ENCODE measurements at regions of chr19 and their contacts with region 1.

Region 1: DNA sequence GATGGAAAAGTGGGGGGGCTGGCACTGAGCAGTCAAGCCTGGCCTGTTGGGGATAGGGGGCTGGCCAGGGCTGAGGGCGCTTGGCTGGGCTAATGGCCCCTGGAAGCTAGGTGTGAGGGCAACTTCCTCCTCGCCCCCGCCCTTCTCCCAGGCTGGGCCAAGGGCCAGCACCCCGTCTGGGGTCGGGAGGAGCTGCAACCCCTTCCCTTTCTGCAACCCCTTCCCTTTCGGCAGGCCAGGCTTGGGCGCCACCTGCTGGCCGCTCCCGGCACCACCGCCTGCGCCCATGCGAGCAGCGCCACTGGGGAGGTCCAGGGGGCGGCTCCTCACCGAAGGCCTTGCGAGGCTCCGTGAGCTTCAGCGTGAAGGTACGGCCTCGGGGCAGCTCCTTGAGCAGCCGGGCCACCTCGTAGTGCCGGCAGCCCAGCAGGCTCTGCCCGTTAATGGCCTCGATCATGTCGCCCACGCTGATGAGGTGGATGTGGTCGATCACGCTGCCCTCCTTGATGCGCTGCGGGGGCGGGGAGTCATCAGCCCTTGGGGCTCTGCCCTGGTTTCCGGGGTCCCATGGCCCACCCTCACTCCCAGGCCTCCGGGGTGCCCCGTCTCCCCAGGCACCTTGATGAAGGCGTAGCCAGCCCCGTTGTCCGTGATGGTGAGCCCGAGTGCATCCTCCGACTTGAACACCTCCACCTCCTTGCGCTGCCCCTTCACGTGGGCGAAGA is 5.0 kb upstream of the PTGER1 start:
- DNase-seq: peak; percentile 95
- H3K4me3 ChIP-seq: peak overlapping the region in 1 of 2 experiments; percentile 50; a peak in 1 of 4 replicates
- H3K27ac ChIP-seq: peak overlapping the region in 1 of 2 experiments; percentile 22; a peak in 1 of 4 replicates
- H3K4me1 ChIP-seq: peaks cover 18 to 26% of the 10 kb centered on the region in 2 experiments; a peak in 3 of 4 replicates
- H3K27me3 ChIP-seq: no peaks in the 10 kb centered on the region
- CTCF ChIP-seq: peak; percentile 89
- EP300 ChIP-seq: no peak
- RAD21 ChIP-seq: peak; percentile 54

Region 2: GRCh38 chr19:14366498-14366915 is 113.6 kb before region 1 on chr19:
- CTCF ChIA-PET with region 1: interaction called, 13 read pairs
- POLR2A ChIA-PET with region 1: no interaction called
- DNase-seq: peak; percentile 51
- H3K4me3 ChIP-seq: no peak overlapping the region
- H3K27ac ChIP-seq: no peak overlapping the region
- H3K4me1 ChIP-seq: peaks cover 0 to 6% of the 10 kb centered on the region in 2 experiments; a peak in 1 of 4 replicates
- H3K27me3 ChIP-seq: no peaks in the 10 kb centered on the region
- CTCF ChIP-seq: no peak
- EP300 ChIP-seq: no peak
- RAD21 ChIP-seq: no peak

Region 3: GRCh38 chr19:14377883-14378328 is 102.2 kb before region 1 on chr19:
- CTCF ChIA-PET with region 1: no interaction called
- POLR2A ChIA-PET with region 1: no interaction called
- DNase-seq: no peak
- H3K4me3 ChIP-seq: no peak overlapping the region
- H3K27ac ChIP-seq: no peak overlapping the region
- H3K4me1 ChIP-seq: peaks cover 0 to 16% of the 10 kb centered on the region in 2 experiments; a peak in 2 of 4 replicates
- H3K27me3 ChIP-seq: no peaks in the 10 kb centered on the region
- CTCF ChIP-seq: no peak
- EP300 ChIP-seq: no peak
- RAD21 ChIP-seq: no peak

Region 4: DNA sequence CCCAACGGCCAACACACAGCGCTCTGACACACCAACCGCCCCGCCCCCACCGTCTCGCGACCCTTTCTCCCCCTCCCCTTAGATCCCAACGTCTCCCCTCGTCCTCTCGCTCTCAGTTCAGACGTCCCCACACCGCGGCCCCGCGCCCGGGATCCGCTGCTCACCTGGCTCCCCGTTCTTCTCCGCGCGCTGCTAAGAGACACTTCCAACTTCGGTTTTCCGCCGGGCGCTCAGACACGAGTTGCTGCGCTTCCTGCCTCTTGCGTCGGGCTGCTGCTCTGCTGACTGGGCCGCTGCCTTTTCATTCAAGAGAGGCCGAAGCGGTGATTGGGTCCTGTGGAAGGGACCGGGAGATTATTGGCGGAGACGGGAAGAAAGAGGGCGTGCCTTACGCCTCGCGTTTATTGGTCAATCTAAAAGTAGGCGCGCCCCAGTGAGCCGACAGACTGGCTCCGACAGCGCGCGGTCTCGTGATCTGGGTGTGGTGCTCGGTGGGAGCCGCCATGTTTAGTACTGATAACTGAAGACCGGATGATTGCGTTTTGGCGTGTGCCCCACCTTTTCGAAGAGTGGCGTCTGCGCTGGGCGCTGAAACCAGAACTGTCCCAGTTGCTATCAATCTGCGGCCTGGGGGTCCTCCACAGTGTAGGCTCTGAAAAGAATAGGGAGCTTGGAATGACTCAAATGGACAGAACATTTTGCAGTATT is 60.9 kb before region 1 on chr19 and contains the start of gene DDX39A:
- CTCF ChIA-PET with region 1: interaction called, 12 read pairs
- POLR2A ChIA-PET with region 1: no interaction called
- DNase-seq: peak; percentile 95
- H3K4me3 ChIP-seq: peak within 1 kb of the TSS; percentile 61 to 98
- H3K27ac ChIP-seq: peak within 1 kb of the TSS; percentile 86 to 91
- H3K4me1 ChIP-seq: peaks cover 7 to 8% of the 10 kb centered on the region in 2 experiments; a peak in 2 of 4 replicates
- H3K27me3 ChIP-seq: no peaks in the 10 kb centered on the region
- CTCF ChIP-seq: no peak
- EP300 ChIP-seq: no peak
- RAD21 ChIP-seq: no peak
- polyA plus RNA-seq, gene DDX39A: 78.0 and 88.8 TPM in 2 replicates

Region 5: DNA sequence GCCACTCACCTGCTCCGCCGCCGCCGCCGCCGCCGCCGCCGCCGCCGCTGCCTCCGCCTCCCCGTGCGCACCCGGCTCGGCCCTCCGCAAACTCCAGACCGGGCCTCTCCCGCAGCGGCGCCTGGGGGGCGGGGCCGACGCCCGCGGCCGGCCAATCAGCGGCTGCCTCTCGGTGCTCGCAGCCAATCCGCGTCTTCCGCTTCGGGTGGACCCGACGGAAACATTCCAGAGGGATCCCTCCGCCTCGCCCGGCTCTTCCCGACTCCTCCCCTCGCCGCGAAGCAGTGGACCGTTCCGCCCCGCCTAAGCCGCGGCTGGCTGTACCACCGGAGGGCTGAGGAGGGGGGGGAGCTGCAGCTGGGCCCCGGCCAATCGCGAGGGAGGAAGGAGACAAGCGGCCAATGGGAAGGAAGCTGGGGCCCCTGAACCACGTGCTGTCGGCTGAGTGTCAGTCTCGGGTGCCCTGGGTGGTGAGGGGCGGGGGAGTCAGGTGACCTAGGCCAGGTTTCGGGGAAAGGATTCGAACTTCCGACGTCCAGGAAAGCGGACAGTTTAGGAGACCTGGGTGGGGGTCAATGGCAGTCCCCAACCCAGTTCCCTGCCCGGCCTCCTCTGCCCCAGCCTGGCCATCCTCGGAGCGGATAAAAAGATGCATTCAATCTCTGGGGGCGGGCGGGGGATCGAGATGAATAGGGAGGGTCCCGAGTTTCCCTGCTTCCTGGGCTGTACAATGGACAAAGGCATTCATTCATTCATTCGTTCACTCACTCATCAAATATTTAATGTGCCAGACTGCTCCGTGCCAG is 16.1 kb after region 1 on chr19 and contains the start of gene GIPC1:
- CTCF ChIA-PET with region 1: interaction called, 45 read pairs
- POLR2A ChIA-PET with region 1: no interaction called
- DNase-seq: peak; percentile 100
- H3K4me3 ChIP-seq: peak within 1 kb of the TSS; percentile 65 to 93
- H3K27ac ChIP-seq: peak within 1 kb of the TSS in 1 of 2 experiments; percentile 67; a peak in 2 of 4 replicates
- H3K4me1 ChIP-seq: peaks cover 4 to 25% of the 10 kb centered on the region in 2 experiments; a peak in 2 of 4 replicates
- H3K27me3 ChIP-seq: no peaks in the 10 kb centered on the region
- CTCF ChIP-seq: no peak
- EP300 ChIP-seq: peak in 1 of 2 experiments; percentile 44; a peak in 3 of 4 replicates
- RAD21 ChIP-seq: no peak
- polyA plus RNA-seq, gene GIPC1: 138 and 144 TPM in 2 replicates

Region 6: GRCh38 chr19:14505488-14506432 is 25.6 kb after region 1 on chr19:
- CTCF ChIA-PET with region 1: interaction called, 14 read pairs
- POLR2A ChIA-PET with region 1: no interaction called
- DNase-seq: peak; percentile 78
- H3K4me3 ChIP-seq: peak overlapping the region in 1 of 2 experiments; percentile 23; a peak in 1 of 4 replicates
- H3K27ac ChIP-seq: peak overlapping the region; percentile 29 to 80; a peak in 3 of 4 replicates
- H3K4me1 ChIP-seq: 0 out of 4 replicates have a peak, but pooled peaks cover 0 to 3% of the 10 kb centered on the region in 2 experiments
- H3K27me3 ChIP-seq: no peaks in the 10 kb centered on the region
- CTCF ChIP-seq: peak; percentile 78
- EP300 ChIP-seq: no peak
- RAD21 ChIP-seq: peak; percentile 20; the same call in 1 of the 2 replicates

Region 7: DNA sequence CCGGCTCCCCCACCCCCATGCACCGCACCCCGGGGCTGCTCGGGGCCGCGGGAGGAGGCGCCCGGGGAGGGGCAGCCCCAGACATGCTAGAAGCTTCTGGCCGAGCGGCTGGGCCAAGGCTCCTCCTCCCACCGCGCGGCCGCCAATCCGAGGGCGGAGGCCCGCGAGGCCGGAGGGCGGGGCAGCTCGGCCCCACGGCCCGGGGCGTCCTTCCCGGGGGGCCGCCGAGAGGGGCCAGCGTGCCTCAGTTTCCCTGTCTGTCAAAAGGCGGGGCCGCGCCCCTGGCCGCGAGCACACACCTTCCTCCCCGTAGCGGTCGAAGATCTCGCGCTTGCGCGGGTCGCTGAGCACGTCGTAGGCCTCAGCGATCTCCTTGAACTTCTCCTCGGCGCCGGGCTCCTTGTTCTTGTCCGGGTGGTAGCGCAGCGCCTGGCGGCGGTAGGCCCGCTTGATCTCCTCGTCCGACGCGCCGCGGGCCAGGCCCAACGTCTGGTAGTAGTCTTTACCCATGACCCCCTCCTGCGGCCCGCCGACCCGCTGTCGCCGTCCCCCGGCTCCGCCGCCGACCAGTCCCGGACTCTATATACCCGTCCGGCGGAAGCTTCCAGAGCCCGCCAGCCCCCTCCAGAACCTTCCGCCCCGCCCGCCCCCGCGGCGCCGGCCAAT is 37.8 kb after region 1 on chr19 and contains the start of gene DNAJB1:
- CTCF ChIA-PET with region 1: interaction called, 20 read pairs
- POLR2A ChIA-PET with region 1: interaction called, 3 read pairs
- DNase-seq: peak; percentile 94
- H3K4me3 ChIP-seq: peak within 1 kb of the TSS; percentile 87 to 90
- H3K27ac ChIP-seq: peak within 1 kb of the TSS; percentile 93 to 96
- H3K4me1 ChIP-seq: peaks cover 24 to 44% of the 10 kb centered on the region in 2 experiments; a peak in 3 of 4 replicates
- H3K27me3 ChIP-seq: no peaks in the 10 kb centered on the region
- CTCF ChIP-seq: no peak
- EP300 ChIP-seq: peak in 1 of 2 experiments; percentile 67; a peak in 2 of 4 replicates
- RAD21 ChIP-seq: no peak
- polyA plus RNA-seq, gene DNAJB1: 95.7 and 103 TPM in 2 replicates